Activated CD4-positive, alpha-beta T cell treated with anti-CD3 and anti-CD28 coated beads, Interleukin-2, amount 10 ng/mL, durations not matched to agents 24 days and 14 days (primary cell): ENCODE measurements at regions of chr3 and their contacts with region 1.

Region 1: GRCh38 chr3:188400494-188401243 is 246.7 kb downstream of the LPP start:
- DNase-seq: peak; percentile 81
- H3K4me3 Mint-ChIP-seq: peak overlapping the region; percentile 18
- H3K27ac Mint-ChIP-seq: peak overlapping the region; percentile 68
- H3K4me1 Mint-ChIP-seq: peaks cover 62% of the 10 kb centered on the region
- H3K27me3 Mint-ChIP-seq: no peaks in the 10 kb centered on the region

Region 2: GRCh38 chr3:188082031-188082430 is 318.6 kb before region 1 on chr3:
- intact Hi-C with region 1: no loop called
- DNase-seq: no peak
- H3K4me3 Mint-ChIP-seq: no peak overlapping the region
- H3K27ac Mint-ChIP-seq: no peak overlapping the region
- H3K4me1 Mint-ChIP-seq: peaks cover 4% of the 10 kb centered on the region
- H3K27me3 Mint-ChIP-seq: no peaks in the 10 kb centered on the region

Region 3: DNA sequence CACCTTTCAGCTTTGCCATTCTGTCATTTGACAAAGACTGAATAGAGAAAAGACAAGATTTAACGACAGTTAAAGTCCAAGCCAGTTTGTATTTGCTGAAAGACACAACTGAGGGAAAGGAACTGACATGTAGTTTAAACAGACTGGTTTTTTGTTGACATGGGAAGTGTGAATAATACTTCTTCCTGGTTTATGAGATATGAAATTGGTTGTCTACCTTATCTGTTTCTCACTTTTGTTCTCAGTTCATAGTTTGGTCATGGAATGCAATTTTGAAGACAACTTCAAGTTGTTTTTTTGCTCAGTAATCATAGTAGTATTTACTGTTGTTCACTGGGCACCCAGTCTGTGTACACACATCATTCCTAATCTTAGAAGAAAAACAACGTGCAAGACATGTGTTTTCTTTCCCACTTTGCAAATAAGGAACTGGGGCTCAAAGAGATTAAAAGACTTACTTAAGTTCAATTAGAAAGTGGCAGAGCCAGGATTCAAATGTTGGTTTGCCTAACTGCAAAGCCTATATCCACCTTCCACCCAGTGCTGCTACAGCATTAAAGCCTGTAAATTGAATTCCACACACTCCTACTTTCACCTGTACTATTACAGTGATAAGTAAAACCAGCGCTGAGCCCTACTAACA is 143.2 kb before region 1 on chr3:
- intact Hi-C with region 1: loop called (anchors 2 kb)
- DNase-seq: no peak
- H3K4me3 Mint-ChIP-seq: no peak overlapping the region
- H3K27ac Mint-ChIP-seq: peak overlapping the region; percentile 85
- H3K4me1 Mint-ChIP-seq: peaks cover 47% of the 10 kb centered on the region
- H3K27me3 Mint-ChIP-seq: no peaks in the 10 kb centered on the region

Region 4: DNA sequence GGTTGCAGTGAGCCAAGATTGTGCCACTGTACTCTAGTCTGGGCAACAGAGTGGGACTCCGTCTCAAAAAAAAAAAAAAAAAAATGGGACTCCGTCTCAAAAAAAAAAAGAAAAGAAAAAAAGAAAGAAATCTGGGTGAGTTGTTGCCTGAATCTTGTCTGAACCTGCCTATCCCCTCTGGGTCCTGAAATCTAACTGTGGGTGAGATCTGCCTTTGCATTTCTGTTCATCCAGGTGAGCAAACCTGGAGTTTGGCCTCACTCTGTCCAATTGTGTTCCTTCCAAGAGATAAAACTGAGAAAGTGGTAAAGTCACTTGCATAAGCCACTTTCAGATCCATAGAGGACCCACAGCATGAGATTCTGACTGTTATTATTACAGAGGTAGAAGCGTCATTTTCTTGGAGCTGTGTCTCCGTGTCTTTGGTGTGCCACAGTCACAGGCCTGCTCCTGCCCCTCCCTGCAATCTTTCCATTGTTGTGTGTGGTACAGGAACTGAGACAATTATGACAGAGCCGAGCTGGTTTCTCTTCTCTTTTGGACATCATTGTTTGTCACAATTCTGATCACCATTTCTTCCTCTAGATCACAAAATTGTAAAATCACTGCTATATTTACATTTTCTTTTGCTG is 10.8 kb before region 1 on chr3:
- intact Hi-C with region 1: loop called (anchors 1 kb)
- DNase-seq: peak; percentile 84
- H3K4me3 Mint-ChIP-seq: peak overlapping the region; percentile 49
- H3K27ac Mint-ChIP-seq: peak overlapping the region; percentile 90
- H3K4me1 Mint-ChIP-seq: peaks cover 42% of the 10 kb centered on the region
- H3K27me3 Mint-ChIP-seq: no peaks in the 10 kb centered on the region

Region 5: GRCh38 chr3:188489639-188490405 is 89.2 kb after region 1 on chr3:
- intact Hi-C with region 1: no loop called
- DNase-seq: no peak
- H3K4me3 Mint-ChIP-seq: no peak overlapping the region
- H3K27ac Mint-ChIP-seq: no peak overlapping the region
- H3K4me1 Mint-ChIP-seq: peaks cover 6% of the 10 kb centered on the region
- H3K27me3 Mint-ChIP-seq: no peaks in the 10 kb centered on the region

Region 6: DNA sequence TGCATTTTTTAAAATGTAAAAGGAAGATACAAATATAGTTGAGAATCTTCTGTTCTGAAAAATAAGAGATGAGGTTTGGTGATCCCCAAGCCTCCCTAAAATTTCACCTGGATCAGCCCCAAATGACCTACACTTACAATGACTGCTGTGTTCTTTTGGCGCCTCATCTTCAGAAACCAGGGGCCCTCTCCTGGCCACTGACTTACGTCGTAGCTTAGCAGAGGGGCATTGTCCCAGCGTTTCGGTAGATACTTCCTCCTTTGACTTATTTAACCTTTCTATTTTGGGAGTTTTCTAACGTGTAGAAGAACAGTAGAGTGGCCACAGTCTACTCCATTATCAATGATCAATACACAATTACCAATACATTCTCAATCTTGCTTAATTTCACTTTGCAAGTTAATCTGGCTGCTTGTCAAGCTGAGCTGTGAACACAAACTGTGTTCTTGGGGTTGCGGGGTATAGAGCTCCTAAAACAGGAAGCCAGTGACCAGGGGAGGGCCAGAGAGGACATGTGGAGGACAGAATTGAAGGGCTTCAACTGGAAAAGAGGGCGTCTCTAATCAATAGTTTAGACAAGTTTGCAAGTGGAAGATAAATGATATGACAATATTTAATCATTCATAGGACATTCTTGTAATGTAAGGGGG is 172.7 kb after region 1 on chr3:
- intact Hi-C with region 1: no loop called
- DNase-seq: no peak
- H3K4me3 Mint-ChIP-seq: no peak overlapping the region
- H3K27ac Mint-ChIP-seq: no peak overlapping the region
- H3K4me1 Mint-ChIP-seq: peaks cover 8% of the 10 kb centered on the region
- H3K27me3 Mint-ChIP-seq: no peaks in the 10 kb centered on the region

Region 7: DNA sequence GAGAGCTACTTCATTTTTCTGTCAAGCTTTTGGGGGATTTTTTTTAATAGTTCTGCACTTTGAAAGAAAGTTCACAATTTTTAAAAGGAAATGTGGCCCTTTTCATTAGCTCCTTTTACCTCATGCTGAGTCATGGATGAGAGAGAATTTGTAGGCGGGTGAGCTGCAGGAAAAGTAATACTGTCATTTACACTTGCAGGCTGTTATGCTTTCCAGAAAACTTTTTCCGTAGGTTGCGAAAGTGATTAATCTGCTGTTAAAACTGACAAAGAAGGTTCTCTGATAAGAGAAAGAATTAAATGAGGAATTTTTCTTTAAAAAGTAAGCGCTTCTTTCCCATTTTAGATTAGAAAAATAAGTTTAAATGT is 183.5 kb after region 1 on chr3:
- intact Hi-C with region 1: loop called (anchors 5 kb)
- DNase-seq: no peak
- H3K4me3 Mint-ChIP-seq: no peak overlapping the region
- H3K27ac Mint-ChIP-seq: no peak overlapping the region
- H3K4me1 Mint-ChIP-seq: peaks cover 14% of the 10 kb centered on the region
- H3K27me3 Mint-ChIP-seq: no peaks in the 10 kb centered on the region

Region 8: DNA sequence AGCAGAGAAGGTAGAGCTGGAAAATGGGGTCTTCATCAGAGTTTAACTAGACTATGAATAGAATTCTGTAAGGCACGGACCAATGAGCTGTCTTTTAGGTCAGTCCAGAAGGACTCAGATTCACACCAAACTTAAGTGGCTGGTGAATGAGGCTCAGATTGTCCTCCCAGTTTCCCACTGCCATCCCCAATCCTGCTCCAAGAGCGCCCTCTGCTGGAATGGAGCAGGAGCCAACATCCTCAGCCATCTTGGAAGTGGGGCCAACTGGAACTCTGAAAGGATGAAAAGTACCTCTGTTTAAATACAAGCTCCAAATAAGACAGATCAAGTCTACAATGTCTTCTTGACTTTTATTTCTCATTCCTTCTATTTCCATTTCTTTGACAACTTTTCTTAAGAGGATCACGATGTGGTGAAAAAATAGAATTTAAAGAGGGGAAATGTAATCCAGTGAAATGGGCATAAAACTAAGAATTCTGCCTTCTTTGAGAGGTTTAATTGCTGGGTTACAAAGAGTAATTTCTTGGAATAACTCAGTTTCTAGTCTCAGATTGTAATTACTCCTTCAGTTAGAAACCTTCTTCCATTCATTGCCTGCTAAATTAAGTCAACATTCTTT is 554.0 kb after region 1 on chr3:
- intact Hi-C with region 1: loop called (anchors 10 kb)
- DNase-seq: peak; percentile 94
- H3K4me3 Mint-ChIP-seq: no peak overlapping the region
- H3K27ac Mint-ChIP-seq: peak overlapping the region; percentile 10
- H3K4me1 Mint-ChIP-seq: peaks cover 27% of the 10 kb centered on the region
- H3K27me3 Mint-ChIP-seq: peaks cover 6% of the 10 kb centered on the region